Prostate gland (tissue), 2 donors: ENCODE measurements at regions of chr9 and their contacts with region 1.

Region 1: DNA sequence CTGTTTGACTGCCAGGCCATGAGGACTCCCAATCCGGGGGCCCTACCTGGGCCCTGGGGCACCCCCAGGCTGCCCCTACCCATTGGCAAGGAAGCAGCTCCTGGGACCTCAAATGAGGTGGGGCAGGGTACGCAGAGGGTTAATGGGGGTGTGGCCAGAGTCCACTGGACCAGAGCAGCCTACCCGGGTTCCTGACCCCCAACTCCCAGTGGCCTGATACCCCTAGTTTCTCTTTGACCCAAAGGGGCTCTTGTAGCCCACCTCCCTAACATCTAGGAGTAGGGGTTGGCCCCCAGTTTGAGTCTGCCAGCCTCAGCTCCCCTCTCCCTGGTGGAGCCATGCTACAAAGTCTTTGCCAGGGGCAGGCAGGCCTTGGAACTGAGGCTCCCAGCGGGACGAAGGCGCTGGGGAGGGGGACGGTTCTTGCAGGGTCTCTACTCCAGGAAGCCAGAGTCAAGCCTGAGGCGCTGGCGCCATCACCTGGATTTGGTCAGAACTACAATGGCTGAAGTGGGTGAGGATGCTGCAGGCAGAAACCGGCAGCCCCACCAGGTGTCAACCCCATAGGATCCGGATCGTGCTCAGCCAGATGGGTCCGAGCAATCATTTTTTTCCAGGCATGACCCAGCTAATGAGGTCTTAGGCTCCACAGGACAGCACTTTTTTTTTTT is 8.4 kb upstream of the CERCAM start:
- DNase-seq: peak; percentile 11
- H3K4me3 ChIP-seq: no peak overlapping the region
- H3K27ac ChIP-seq: no peak overlapping the region
- H3K4me1 ChIP-seq: no peaks in the 10 kb centered on the region
- H3K27me3 ChIP-seq: no peaks in the 10 kb centered on the region
- CTCF ChIP-seq: peak in 2 of 4 experiments; percentile 29 to 36
- POLR2A ChIP-seq: no peak

Region 2: DNA sequence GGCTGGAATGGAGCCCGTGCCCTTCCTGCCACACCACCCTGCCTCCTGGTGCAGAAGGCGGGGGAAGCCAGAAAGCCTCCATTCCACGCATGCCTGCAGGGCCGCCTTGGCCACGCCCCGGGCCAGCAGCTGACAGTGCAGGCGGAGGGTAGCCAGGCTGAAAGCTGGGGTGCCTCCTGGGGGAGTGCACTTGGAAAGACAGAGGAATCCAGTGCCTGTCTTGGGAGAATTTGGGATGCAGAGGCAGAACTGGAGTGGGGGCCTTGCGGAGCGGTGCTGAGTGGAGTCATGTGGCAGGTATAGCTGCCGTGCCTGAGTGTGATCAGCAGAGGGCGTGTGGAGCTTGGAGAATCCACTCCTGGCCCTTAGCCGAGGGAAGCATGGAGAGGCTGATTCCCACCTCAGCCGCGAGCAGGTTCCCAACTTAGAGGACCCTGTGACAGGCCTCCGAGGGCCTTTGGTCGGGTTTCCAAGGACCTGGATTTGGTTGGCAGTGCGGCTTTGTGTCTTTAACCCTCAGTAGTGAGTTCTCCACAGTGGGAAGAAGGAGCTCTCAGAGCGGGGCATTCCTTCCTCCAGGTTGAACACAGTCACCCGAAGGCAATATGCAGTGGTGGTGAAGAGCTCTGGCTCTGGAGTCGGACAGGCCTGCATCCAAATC is 50.1 kb before region 1 on chr9:
- intact Hi-C with region 1: loop called (anchors 5 kb)
- DNase-seq: peak; percentile 87
- H3K4me3 ChIP-seq: peak overlapping the region; percentile 25 to 39
- H3K27ac ChIP-seq: peak overlapping the region; percentile 28 to 46
- H3K4me1 ChIP-seq: no peaks in the 10 kb centered on the region
- H3K27me3 ChIP-seq: no peaks in the 10 kb centered on the region
- CTCF ChIP-seq: peak; percentile 69 to 92 (median 80)
- POLR2A ChIP-seq: peak; percentile 8